Activated B cell treated with CpG ODN at 0.5 μM for 24 hours (primary cell): ENCODE measurements at regions of chr7 and their contacts with region 1.

Region 1: GRCh38 chr7:44748045-44748947 is at the start of gene ZMIZ2:
- DNase-seq: peak; percentile 97
- ATAC-seq: peak; percentile 78
- H3K4me3 Mint-ChIP-seq: peak within 1 kb of the TSS; percentile 91
- H3K27ac Mint-ChIP-seq: peak within 1 kb of the TSS; percentile 95
- H3K4me1 Mint-ChIP-seq: peaks cover 48% of the 10 kb centered on the region
- H3K27me3 Mint-ChIP-seq: no peaks in the 10 kb centered on the region
- CTCF ChIP-seq: no peak
- total RNA-seq, gene ZMIZ2: 378 and 440 TPM in 2 replicates

Region 2: GRCh38 chr7:44581879-44582603 is 166.3 kb before region 1 on chr7 and contains the start of gene TMED4:
- CTCF ChIA-PET with region 1: no interaction called
- POLR2A ChIA-PET with region 1: interaction called, 27 read pairs
- intact Hi-C with region 1: loop called (anchors 1 kb)
- DNase-seq: peak; percentile 100
- ATAC-seq: peak; percentile 90
- H3K4me3 Mint-ChIP-seq: peak within 1 kb of the TSS; percentile 90
- H3K27ac Mint-ChIP-seq: peak within 1 kb of the TSS; percentile 95
- H3K4me1 Mint-ChIP-seq: peaks cover 29% of the 10 kb centered on the region
- H3K27me3 Mint-ChIP-seq: peaks cover 2% of the 10 kb centered on the region
- CTCF ChIP-seq: no peak
- total RNA-seq, gene TMED4: 61.7 and 70.1 TPM in 2 replicates

Region 3: GRCh38 chr7:44606450-44607254 is 141.6 kb before region 1 on chr7 and contains the start of gene OGDH:
- CTCF ChIA-PET with region 1: no interaction called
- POLR2A ChIA-PET with region 1: interaction called, 90 read pairs
- intact Hi-C with region 1: loop called (anchors 1 kb)
- DNase-seq: peak; percentile 100
- ATAC-seq: peak; percentile 94
- H3K4me3 Mint-ChIP-seq: peak within 1 kb of the TSS; percentile 98
- H3K27ac Mint-ChIP-seq: peak within 1 kb of the TSS; percentile 98
- H3K4me1 Mint-ChIP-seq: peaks cover 45% of the 10 kb centered on the region
- H3K27me3 Mint-ChIP-seq: no peaks in the 10 kb centered on the region
- CTCF ChIP-seq: no peak
- total RNA-seq, gene OGDH: 79.5 and 81.7 TPM in 2 replicates

Region 4: DNA sequence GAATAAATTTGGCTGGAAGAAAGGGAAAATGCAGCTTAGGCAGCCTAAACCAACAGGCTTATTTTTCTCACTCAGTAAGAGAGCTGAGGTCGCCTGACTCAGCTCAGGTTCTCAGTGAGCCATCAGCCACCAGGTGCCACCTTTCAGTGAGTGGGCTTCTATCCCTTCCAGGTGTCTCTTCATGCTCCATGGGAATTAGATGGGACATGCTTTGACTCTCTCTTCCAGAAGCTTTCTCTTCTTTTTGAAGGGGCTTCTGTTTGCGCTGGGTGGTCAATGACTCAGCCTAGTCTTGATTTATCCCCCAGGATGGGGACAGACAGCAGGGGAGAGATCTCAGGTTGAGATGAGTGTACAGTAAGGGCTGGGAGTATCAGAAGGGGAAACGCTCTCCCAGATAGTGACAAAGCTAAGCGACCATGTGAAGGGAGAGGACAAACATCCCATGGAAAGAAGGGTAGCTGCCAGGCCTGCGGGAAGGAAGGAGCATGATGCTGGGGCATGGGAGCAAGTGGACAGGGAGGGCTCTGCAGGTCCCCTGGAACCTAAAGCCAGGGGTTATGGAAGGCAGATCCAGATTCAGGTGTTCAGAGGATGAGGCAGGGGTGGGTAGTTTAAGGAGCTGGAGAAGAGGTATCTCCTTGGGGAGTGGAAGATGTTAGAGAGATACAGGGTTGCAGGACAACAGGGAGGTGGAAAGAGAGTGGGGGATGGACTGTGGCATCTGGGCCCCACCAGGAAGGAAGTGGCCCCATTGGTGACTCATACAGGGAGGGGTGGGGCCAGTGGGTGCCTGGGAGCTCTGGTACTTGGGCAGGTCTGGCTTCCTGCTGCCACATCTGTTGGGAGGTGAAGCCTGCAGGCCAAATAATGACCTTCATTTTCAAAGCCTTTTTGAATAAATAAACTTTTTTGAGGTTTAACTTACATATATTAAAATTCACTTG is 109.4 kb before region 1 on chr7:
- CTCF ChIA-PET with region 1: interaction called, 13 read pairs
- POLR2A ChIA-PET with region 1: interaction called, 138 read pairs
- intact Hi-C with region 1: loop called (anchors 1 kb)
- DNase-seq: peak; percentile 69
- ATAC-seq: peak; percentile 82
- H3K4me3 Mint-ChIP-seq: peak overlapping the region; percentile 84
- H3K27ac Mint-ChIP-seq: peak overlapping the region; percentile 97
- H3K4me1 Mint-ChIP-seq: peaks cover 64% of the 10 kb centered on the region
- H3K27me3 Mint-ChIP-seq: no peaks in the 10 kb centered on the region
- CTCF ChIP-seq: no peak

Region 5: GRCh38 chr7:44706788-44707560 is 41.3 kb before region 1 on chr7:
- CTCF ChIA-PET with region 1: no interaction called
- POLR2A ChIA-PET with region 1: no interaction called
- intact Hi-C with region 1: loop called (anchors 1 kb)
- DNase-seq: no peak
- ATAC-seq: no peak
- H3K4me3 Mint-ChIP-seq: no peak overlapping the region
- H3K27ac Mint-ChIP-seq: no peak overlapping the region
- H3K4me1 Mint-ChIP-seq: no peaks in the 10 kb centered on the region
- H3K27me3 Mint-ChIP-seq: no peaks in the 10 kb centered on the region
- CTCF ChIP-seq: no peak

Region 6: DNA sequence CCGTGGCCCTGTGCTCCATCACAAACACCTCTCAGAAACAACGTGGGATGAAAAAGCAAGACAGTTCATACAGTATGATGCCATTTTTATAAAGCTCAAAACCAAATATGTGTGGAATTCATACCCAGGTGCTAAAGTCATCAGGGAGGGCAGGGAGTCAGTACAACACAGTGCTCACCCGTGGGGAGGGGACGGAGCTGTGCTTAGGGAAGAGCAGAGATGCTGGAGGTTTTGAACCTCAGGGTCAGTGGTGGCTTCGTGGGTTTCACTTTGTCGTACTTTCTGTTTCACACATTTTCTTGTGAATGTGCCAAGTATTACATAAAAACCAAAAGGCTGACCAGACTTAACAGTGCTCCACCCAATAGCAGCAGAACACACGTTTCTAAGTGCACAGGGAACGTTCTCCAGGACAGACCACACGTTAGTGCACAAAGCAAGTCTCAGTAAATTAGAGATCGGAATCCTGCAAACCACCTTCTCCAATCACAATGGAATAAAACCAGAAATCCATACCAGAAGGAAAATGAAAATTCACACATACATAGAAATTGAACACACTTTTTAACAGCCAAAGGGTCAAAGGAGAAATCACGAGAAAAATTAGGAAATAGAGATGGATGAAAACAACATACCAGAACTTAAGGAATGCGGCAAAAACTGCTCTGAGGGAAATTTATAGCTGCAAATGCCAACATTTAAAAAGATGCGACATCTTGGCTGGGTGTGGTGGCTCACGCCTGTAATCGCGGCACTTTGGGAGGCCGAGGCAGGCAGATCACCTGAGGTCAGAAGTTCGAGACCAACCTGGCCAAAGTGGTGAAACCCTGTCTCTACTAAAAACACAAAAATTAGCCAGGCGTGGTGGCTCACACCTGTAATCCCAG is 21.7 kb after region 1 on chr7:
- CTCF ChIA-PET with region 1: interaction called, 5 read pairs
- POLR2A ChIA-PET with region 1: interaction called, 66 read pairs
- intact Hi-C with region 1: loop called (anchors 1 kb)
- DNase-seq: no peak
- ATAC-seq: peak; percentile 10
- H3K4me3 Mint-ChIP-seq: peak overlapping the region; percentile 58
- H3K27ac Mint-ChIP-seq: peak overlapping the region; percentile 88
- H3K4me1 Mint-ChIP-seq: peaks cover 60% of the 10 kb centered on the region
- H3K27me3 Mint-ChIP-seq: no peaks in the 10 kb centered on the region
- CTCF ChIP-seq: no peak

Region 7: DNA sequence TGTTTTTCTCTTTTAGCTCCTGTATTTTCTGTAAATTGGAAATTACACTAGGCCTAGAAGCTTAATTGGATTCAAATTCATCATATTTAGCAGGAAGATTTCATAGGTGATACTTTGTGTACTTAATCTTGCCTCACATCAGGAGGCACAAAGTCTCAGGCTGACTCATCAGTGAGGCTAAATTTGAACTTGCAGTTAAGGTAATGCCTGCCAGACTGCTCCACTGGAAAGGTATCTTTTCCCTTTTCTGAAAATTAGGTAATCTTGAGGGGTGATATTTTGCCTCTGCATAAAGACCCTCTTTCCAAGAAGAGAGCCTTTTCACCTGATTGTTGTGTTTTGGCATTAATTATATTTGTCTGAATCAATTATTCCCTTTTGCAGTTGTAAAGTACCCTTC is 62.8 kb after region 1 on chr7:
- CTCF ChIA-PET with region 1: no interaction called
- POLR2A ChIA-PET with region 1: no interaction called
- intact Hi-C with region 1: no loop called
- DNase-seq: no peak
- ATAC-seq: no peak
- H3K4me3 Mint-ChIP-seq: no peak overlapping the region
- H3K27ac Mint-ChIP-seq: no peak overlapping the region
- H3K4me1 Mint-ChIP-seq: no peaks in the 10 kb centered on the region
- H3K27me3 Mint-ChIP-seq: no peaks in the 10 kb centered on the region
- CTCF ChIP-seq: no peak